ENCODE measurements at regions of chr12 and their contacts with region 1.

Region 1: GRCh38 chr12:94743174-94743573 is 92.8 kb upstream of the TMCC3 start:
- DNase-seq: no peak
- ATAC-seq: no peak
- H3K4me3 ChIP-seq: no peak overlapping the region
- H3K4me3 Mint-ChIP-seq: no peak overlapping the region
- H3K27ac ChIP-seq: no peak overlapping the region
- H3K27ac Mint-ChIP-seq: no peak overlapping the region
- H3K4me1 ChIP-seq: no peaks in the 10 kb centered on the region
- H3K4me1 Mint-ChIP-seq: no peaks in the 10 kb centered on the region
- H3K27me3 ChIP-seq: no peaks in the 10 kb centered on the region
- H3K27me3 Mint-ChIP-seq: peaks cover 19% of the 10 kb centered on the region
- CTCF ChIP-seq: no peak

Region 2: DNA sequence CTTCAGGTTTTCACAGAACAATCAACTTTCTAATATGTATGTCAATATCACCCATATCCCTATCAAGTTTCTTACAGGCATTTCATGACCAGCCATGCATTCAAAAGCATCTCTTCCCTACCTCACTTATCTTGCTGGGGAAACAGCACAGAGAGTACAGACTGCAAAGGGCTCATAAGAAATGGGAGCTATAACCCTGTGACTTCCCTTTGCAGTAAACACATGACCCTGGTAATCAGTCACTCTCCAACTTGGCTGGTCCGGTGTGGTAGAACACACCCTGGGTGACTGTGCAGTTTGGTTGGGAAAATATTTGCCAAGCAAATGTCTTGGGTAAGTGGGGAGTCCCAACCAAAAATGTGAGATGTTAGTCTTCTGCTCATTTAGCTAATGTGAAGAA is 43.4 kb before region 1 on chr12:
- CTCF ChIA-PET with region 1: no interaction called
- POLR2A ChIA-PET with region 1: no interaction called
- intact Hi-C with region 1: loop called in 1 of 2 experiments (anchors 1 kb)
- DNase-seq: peak in 1 of 9 experiments; percentile 12
- ATAC-seq: no peak
- H3K4me3 ChIP-seq: no peak overlapping the region
- H3K4me3 Mint-ChIP-seq: no peak overlapping the region
- H3K27ac ChIP-seq: no peak overlapping the region
- H3K27ac Mint-ChIP-seq: no peak overlapping the region
- H3K4me1 ChIP-seq: no peaks in the 10 kb centered on the region
- H3K4me1 Mint-ChIP-seq: peaks cover 2% of the 10 kb centered on the region
- H3K27me3 ChIP-seq: no peaks in the 10 kb centered on the region
- H3K27me3 Mint-ChIP-seq: peaks cover 6% of the 10 kb centered on the region
- CTCF ChIP-seq: no peak

Measured in CD8-positive, alpha-beta T cell (primary cell).